Mucosa of descending colon (tissue), 3 donors: ENCODE measurements at regions of chr1 and their contacts with region 1.

Region 1: DNA sequence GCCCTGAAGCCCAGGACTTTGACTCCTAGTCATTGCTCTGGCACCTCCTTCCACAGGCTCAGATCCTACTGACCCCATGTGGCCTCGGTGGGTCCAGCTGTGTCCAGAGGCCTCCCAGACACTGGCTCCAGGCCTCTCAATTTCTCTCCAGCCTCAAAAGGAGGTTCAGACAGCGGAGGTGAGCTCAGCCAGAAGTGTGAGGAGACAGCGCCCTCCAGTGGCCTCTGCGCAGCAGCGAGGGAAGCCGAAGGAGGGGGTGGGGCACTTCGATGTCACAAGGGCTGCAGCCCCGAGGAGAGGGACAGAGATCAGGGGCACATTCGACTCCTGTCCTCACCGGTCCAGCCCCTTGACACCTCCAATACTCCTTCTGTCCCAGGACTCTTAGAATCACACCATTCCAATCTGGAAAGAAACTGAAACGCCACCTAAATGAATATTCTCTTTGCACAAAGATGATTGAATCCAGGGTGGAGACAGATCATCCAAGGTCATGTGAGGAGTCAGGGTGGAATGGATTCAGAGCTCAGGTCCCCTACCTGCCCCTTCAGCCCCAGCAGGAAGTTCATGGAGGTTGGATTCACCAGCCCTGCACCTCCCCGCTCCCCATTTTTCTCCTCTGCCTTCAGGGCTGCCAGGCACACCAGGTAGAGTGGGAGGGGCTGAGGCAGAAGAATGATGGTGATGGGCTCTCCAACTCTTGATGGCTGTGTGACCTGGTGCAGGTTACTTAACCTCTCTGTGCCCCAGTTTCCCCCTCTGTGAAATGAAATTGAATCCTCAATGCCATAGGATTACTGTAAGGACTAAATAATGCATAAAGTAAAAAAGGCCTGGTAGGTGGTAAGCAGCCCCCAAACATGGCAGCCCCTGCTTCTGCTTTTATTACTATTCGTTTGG is 34.8 kb upstream of the ZBTB40 start:
- DNase-seq: peak; percentile 69 to 86 (median 80)
- ATAC-seq: peak; percentile 81
- H3K4me3 ChIP-seq: no peak overlapping the region
- H3K4me1 ChIP-seq: peaks cover 6% of the 10 kb centered on the region
- CTCF ChIP-seq: peak; percentile 85

Region 2: DNA sequence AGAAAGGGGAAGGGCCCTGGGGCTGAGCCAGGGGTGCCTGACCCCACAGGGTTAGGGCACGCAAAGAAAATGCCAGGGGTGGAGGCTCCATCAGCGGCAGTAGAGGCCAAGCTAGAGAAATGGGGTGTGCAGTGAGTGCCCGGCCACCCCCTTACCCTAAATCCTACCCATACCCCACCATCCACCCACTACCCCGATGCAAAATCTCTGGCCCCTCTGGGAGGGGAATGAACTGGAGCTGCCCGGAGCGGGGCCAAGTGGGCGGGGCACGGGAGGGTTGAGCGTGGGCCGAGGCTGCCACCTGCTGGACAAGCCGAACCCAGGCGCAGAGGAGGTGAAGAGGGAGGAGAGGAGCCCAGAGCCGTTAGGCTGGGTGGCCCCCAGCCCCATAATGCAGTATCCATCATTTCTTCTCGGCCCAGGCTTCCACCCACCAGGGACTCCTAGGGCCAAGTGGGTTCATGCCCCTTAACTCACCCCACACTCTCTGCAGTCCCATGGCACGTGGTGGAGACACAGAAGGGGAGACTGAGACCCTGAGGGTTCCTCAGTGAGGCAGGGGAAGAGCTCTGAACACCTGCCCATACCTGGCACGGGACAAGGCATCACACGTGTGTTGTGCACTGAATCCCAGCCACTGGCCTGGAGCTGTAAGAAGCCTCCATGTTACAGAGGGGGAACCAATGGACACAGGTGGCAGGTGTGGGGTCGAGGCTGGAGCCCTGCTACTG is 225.3 kb after region 1 on chr1:
- intact Hi-C with region 1: loop called (anchors 1 to 5 kb)
- DNase-seq: peak; percentile 77 to 87 (median 85)
- ATAC-seq: peak; percentile 83
- H3K4me3 ChIP-seq: no peak overlapping the region
- H3K4me1 ChIP-seq: no peaks in the 10 kb centered on the region
- CTCF ChIP-seq: peak; percentile 78